Activated CD4-positive, alpha-beta memory T cell treated with anti-CD3 and anti-CD28 coated beads, Interleukin-2, amount 10 ng/mL, durations not matched to agents 7 days and 5 days (primary cell): ENCODE measurements at regions of chrX and their contacts with region 1.

Region 1: GRCh38 chrX:13734278-13735172 is at the starts of genes OFD1 and TRAPPC2:
- DNase-seq: peak; percentile 92
- H3K4me3 Mint-ChIP-seq: peak within 1 kb of the TSS; percentile 90
- H3K27ac Mint-ChIP-seq: peak within 1 kb of the TSS; percentile 96
- H3K4me1 Mint-ChIP-seq: peaks cover 51% of the 10 kb centered on the region
- H3K27me3 Mint-ChIP-seq: no peaks in the 10 kb centered on the region
- total RNA-seq, gene OFD1: 41.3 to 47.3 TPM
- total RNA-seq, gene TRAPPC2: 21.0 to 22.6 TPM

Region 2: DNA sequence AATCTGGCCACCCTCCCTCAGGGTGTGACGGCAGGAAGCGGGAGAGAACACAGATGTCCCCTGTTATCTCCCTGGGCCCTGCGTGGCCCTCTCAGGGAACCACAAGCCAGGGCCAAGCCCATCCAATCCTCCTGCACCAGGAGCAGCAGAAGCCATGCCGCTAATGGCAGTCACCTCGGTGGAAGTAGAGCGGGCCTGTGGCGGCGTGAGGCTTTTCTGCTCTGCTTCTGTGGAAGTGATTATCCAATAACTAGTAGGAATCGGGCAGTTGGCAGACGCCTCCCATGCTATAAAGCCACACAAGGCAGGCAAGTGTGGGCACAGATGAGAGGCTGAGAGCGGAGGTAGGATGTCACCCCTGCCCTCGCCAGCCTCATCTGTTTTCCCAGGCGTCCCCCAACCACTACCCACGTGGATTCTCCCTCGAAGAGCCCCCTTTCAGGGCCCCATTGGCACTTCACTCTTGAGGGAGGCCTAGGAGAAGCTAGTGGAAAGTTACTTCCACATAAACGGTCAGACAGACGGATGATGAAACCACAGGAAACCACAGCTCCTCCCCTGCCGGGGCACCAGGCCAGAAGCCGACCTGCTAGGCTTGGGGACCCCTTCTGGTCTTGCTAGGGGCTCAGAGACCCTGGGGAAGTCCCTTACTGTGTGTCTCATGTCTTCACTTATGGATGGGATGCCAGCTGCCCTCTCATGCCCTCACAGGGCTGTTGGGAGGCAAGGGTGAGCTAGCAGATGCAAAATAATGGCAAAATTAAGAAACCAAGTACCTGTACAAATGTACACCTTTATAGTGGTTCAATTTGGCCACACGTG is 778.4 kb before region 1 on chrX:
- CTCF ChIA-PET with region 1: no interaction called
- POLR2A ChIA-PET with region 1: interaction called, 12 read pairs
- DNase-seq: peak; percentile 71
- H3K4me3 Mint-ChIP-seq: peak overlapping the region; percentile 80
- H3K27ac Mint-ChIP-seq: peak overlapping the region; percentile 99
- H3K4me1 Mint-ChIP-seq: peaks cover 72% of the 10 kb centered on the region
- H3K27me3 Mint-ChIP-seq: no peaks in the 10 kb centered on the region

Region 3: DNA sequence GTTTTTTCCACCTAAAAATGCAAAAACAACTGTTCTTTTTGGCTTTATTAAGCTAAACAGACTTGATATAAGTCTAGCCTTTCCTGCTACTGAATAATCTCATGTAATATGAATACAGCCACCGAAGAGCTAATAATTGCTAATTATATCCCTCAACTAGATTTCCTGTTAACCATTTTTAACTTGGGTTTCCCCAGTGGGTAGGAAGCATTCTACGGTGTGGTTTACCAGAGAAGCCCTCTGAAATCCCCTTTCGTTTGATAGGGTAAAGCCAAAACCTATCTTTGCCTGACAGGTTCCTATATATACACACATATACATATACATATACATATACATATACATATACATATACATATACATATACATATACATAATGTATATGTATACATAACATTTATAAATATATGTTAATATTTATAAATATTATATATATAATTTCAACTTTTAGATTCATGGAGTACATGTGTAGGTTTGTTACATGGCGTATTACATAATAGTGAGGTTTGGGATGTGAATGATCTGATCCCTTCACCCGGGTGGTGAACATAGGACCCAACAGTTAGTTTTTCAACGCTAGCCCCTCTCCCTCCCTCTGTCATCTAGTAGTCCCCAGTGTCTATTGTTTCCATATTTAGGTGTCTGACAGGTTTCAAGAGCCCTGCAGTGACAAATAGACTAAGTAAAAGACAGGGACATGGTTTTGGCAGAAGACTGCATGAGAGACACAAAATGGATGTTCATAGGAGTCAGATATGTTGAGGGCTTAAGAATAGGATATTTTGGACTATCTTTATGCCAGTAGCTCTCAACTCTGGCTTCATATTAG is 477.1 kb before region 1 on chrX:
- CTCF ChIA-PET with region 1: no interaction called
- POLR2A ChIA-PET with region 1: no interaction called
- DNase-seq: no peak
- H3K4me3 Mint-ChIP-seq: no peak overlapping the region
- H3K27ac Mint-ChIP-seq: no peak overlapping the region
- H3K4me1 Mint-ChIP-seq: peaks cover 35% of the 10 kb centered on the region
- H3K27me3 Mint-ChIP-seq: no peaks in the 10 kb centered on the region

Region 4: GRCh38 chrX:13662355-13662791 is 72.2 kb before region 1 on chrX:
- CTCF ChIA-PET with region 1: no interaction called
- POLR2A ChIA-PET with region 1: interaction called, 31 read pairs
- DNase-seq: no peak
- H3K4me3 Mint-ChIP-seq: peak overlapping the region; percentile 43
- H3K27ac Mint-ChIP-seq: peak overlapping the region; percentile 67
- H3K4me1 Mint-ChIP-seq: peaks cover 26% of the 10 kb centered on the region
- H3K27me3 Mint-ChIP-seq: no peaks in the 10 kb centered on the region

Region 5: DNA sequence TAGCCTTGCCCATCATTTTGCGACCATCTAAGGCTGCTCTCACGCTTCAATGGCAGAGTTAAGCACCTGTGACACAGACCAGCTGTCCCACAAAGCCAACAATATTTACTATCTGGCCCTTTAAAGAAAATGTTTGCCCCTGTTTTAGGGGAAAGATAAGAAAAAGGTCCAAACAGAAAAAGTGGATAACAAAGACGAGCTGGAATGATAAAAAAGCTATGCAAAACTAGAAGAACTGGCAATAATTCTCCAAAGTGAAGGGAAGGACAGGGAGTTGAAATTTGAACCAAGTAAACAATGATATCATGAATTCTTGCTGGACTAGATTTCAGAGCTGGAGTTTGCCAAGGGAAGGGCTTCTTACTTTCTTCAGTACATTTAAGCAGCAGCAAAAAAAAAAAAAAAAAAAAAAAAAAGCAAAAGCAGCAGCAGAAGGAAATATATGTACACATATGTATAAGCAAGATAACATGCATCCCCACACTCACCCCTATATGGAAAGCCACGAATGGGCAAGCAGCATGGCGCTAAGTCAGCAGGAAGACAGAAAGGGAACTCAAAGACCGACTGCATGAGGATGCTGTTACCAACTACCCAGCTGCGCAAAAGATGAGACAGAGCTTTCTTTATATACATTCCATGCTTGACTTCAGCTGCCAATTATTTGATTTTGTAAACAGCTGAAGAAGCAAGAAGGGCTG is 12.6 kb before region 1 on chrX:
- CTCF ChIA-PET with region 1: interaction called, 7 read pairs
- POLR2A ChIA-PET with region 1: interaction called, 62 read pairs
- DNase-seq: no peak
- H3K4me3 Mint-ChIP-seq: no peak overlapping the region
- H3K27ac Mint-ChIP-seq: no peak overlapping the region
- H3K4me1 Mint-ChIP-seq: peaks cover 59% of the 10 kb centered on the region
- H3K27me3 Mint-ChIP-seq: no peaks in the 10 kb centered on the region

Region 6: GRCh38 chrX:13755254-13755865 is 20.8 kb after region 1 on chrX:
- CTCF ChIA-PET with region 1: interaction called, 18 read pairs
- POLR2A ChIA-PET with region 1: interaction called, 15 read pairs
- DNase-seq: peak; percentile 23
- H3K4me3 Mint-ChIP-seq: no peak overlapping the region
- H3K27ac Mint-ChIP-seq: no peak overlapping the region
- H3K4me1 Mint-ChIP-seq: peaks cover 31% of the 10 kb centered on the region
- H3K27me3 Mint-ChIP-seq: no peaks in the 10 kb centered on the region

Region 7: GRCh38 chrX:13774696-13775095 is 40.2 kb after region 1 on chrX:
- CTCF ChIA-PET with region 1: no interaction called
- POLR2A ChIA-PET with region 1: no interaction called
- DNase-seq: no peak
- H3K4me3 Mint-ChIP-seq: no peak overlapping the region
- H3K27ac Mint-ChIP-seq: no peak overlapping the region
- H3K4me1 Mint-ChIP-seq: no peaks in the 10 kb centered on the region
- H3K27me3 Mint-ChIP-seq: no peaks in the 10 kb centered on the region